Sigmoid colon (tissue), 7 donors: ENCODE measurements at regions of chr1 and their contacts with region 1.

Region 1: GRCh38 chr1:93304716-93305138 is 41.0 kb upstream of the DR1 start:
- DNase-seq: no peak
- H3K4me3 ChIP-seq: no peak overlapping the region
- H3K27ac ChIP-seq: no peak overlapping the region
- H3K4me1 ChIP-seq: no peaks in the 10 kb centered on the region
- H3K27me3 ChIP-seq: no peaks in the 10 kb centered on the region
- CTCF ChIP-seq: peak; percentile 70 to 84 (median 78)
- EP300 ChIP-seq: no peak
- POLR2A ChIP-seq: no peak

Region 2: DNA sequence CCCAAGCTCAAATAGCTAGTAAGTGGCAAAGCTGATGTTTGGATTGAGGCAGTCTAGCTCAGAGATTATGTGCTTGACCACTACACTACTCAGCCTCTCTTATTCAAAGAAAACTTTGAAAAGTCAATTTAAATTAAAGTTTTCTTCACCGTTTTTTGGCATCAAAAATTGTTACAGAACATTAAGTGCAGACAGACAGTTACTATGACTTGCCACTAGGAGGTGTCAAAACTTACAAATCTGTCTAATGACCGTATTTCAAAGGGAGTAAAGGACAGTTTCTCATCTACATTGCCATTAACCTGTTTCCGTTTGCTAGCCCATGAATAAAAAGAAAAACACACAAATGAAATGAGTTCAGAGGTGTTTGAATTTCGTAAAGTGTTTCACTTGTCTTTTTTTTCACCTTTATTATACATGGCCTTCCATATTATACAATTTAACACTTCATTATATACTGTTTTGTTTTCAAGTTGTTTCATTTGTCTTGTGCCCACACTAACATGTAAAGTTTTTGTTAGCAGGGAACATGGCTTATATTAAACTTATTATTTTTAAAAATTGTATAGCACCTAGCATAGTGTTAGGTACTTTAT is 283.1 kb before region 1 on chr1:
- intact Hi-C with region 1: loop called (anchors 10 kb)
- DNase-seq: no peak
- H3K4me3 ChIP-seq: no peak overlapping the region
- H3K27ac ChIP-seq: no peak overlapping the region
- H3K4me1 ChIP-seq: no peaks in the 10 kb centered on the region
- H3K27me3 ChIP-seq: no peaks in the 10 kb centered on the region
- CTCF ChIP-seq: peak in 3 of 4 experiments; percentile 51 to 65 (median 55)
- EP300 ChIP-seq: no peak
- POLR2A ChIP-seq: no peak

Region 3: GRCh38 chr1:93155335-93155734 is 149.4 kb before region 1 on chr1:
- intact Hi-C with region 1: no loop called
- DNase-seq: no peak
- H3K4me3 ChIP-seq: no peak overlapping the region
- H3K27ac ChIP-seq: no peak overlapping the region
- H3K4me1 ChIP-seq: peaks cover 0 to 11% (median 2%) of the 10 kb centered on the region in 4 donors
- H3K27me3 ChIP-seq: no peaks in the 10 kb centered on the region
- CTCF ChIP-seq: no peak
- EP300 ChIP-seq: no peak
- POLR2A ChIP-seq: no peak

Region 4: GRCh38 chr1:93345633-93346420 is 41.1 kb after region 1 on chr1 and contains the start of gene DR1:
- intact Hi-C with region 1: loop called (anchors 2 kb)
- DNase-seq: peak; percentile 97
- H3K4me3 ChIP-seq: peak within 1 kb of the TSS; percentile 91 to 99 (median 96)
- H3K27ac ChIP-seq: peak within 1 kb of the TSS; percentile 94 to 98 (median 96)
- H3K4me1 ChIP-seq: peaks cover 0 to 69% (median 32%) of the 10 kb centered on the region in 4 donors
- H3K27me3 ChIP-seq: no peaks in the 10 kb centered on the region
- CTCF ChIP-seq: no peak
- EP300 ChIP-seq: peak in 2 of 4 donors; percentile 57 to 72
- POLR2A ChIP-seq: peak; percentile 84 to 90
- total RNA-seq, gene DR1: 19.9 to 24.2 (median 20.3) TPM

Region 5: GRCh38 chr1:93437976-93438605 is 133.4 kb after region 1 on chr1:
- intact Hi-C with region 1: loop called (anchors 5 kb)
- DNase-seq: no peak
- H3K4me3 ChIP-seq: no peak overlapping the region
- H3K27ac ChIP-seq: no peak overlapping the region
- H3K4me1 ChIP-seq: no peaks in the 10 kb centered on the region
- H3K27me3 ChIP-seq: no peaks in the 10 kb centered on the region
- CTCF ChIP-seq: peak; percentile 20 to 70 (median 50)
- EP300 ChIP-seq: no peak
- POLR2A ChIP-seq: no peak

Region 6: DNA sequence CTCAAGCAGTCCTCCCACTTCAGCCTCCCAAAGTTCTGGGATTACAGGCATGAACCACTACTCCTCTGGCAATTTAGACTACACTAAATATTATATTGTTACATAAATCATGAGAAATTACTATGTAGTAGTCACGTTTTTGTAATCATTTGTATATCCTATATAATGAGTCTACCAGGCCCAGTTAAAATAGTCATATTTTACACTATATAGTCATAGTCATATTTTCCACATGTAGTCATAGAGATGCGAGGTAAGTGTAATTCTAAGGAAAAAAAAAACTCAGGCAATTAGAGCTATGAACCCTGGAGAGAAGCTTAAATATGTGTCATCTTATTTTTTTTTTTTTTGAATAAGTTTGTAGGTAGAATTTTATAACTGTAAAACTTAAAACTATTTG is 233.2 kb after region 1 on chr1:
- intact Hi-C with region 1: no loop called
- DNase-seq: no peak
- H3K4me3 ChIP-seq: no peak overlapping the region
- H3K27ac ChIP-seq: no peak overlapping the region
- H3K4me1 ChIP-seq: no peaks in the 10 kb centered on the region
- H3K27me3 ChIP-seq: no peaks in the 10 kb centered on the region
- CTCF ChIP-seq: no peak
- EP300 ChIP-seq: no peak
- POLR2A ChIP-seq: no peak

Region 7: DNA sequence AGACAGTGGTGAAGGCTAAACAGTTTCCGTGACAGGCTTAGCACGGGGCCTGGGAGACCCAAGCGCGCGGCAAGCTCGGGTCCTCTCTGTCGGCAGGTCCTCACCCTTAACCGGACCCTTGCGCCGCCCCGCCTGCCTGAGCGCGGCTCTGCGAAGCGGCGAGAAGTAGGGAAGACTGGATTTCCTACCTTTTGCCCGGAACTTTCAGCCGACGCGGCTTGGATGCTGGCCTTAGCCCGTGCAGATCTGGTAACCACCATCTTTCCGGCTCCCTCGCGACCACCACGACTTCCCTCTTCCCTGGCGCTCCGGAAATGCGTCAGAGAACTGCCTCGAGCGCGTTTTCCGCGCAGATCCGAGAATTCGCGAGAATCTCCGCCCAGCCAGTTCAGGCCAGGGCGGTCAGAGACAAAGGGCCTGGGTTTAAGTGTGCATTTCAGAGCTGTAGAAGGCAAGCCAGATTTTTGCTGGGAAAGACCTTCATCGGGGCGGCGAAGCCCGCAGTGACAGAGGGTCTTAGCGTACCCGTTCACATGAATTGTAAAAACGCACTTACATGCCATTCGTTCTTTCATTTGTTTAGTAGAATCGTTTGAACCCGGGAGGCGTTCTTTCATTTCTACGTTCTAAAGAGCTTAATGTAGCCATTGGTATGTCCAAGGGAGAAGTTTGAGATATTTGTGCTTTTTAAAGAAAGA is 574.3 kb after region 1 on chr1 and contains the start of gene DNTTIP2:
- intact Hi-C with region 1: loop called (anchors 5 kb)
- DNase-seq: peak; percentile 94
- H3K4me3 ChIP-seq: peak within 1 kb of the TSS; percentile 79 to 99 (median 94)
- H3K27ac ChIP-seq: peak within 1 kb of the TSS; percentile 89 to 97 (median 94)
- H3K4me1 ChIP-seq: peaks cover 0 to 26% (median 17%) of the 10 kb centered on the region in 4 donors
- H3K27me3 ChIP-seq: no peaks in the 10 kb centered on the region
- CTCF ChIP-seq: no peak
- EP300 ChIP-seq: peak in 1 of 4 donors; percentile 72
- POLR2A ChIP-seq: peak; percentile 88 to 94
- total RNA-seq, gene DNTTIP2: 24.6 to 48.9 (median 35.3) TPM